Breast epithelium (tissue), 4 donors: ENCODE measurements at regions of chr12 and their contacts with region 1.

Region 1: GRCh38 chr12:50504798-50505385 is at the start of gene DIP2B:
- DNase-seq: peak; percentile 93 to 95
- H3K4me3 ChIP-seq: peak within 1 kb of the TSS; percentile 83 to 87 (median 85)
- H3K27ac ChIP-seq: peak within 1 kb of the TSS; percentile 93 to 94
- H3K4me1 ChIP-seq: peaks cover 0 to 7% of the 10 kb centered on the region in 2 donors
- H3K27me3 ChIP-seq: no peaks in the 10 kb centered on the region
- CTCF ChIP-seq: peak; percentile 94 to 99 (median 97)
- POLR2A ChIP-seq: no peak
- total RNA-seq, gene DIP2B: 26.6 to 44.8 (median 33.4) TPM

Region 2: DNA sequence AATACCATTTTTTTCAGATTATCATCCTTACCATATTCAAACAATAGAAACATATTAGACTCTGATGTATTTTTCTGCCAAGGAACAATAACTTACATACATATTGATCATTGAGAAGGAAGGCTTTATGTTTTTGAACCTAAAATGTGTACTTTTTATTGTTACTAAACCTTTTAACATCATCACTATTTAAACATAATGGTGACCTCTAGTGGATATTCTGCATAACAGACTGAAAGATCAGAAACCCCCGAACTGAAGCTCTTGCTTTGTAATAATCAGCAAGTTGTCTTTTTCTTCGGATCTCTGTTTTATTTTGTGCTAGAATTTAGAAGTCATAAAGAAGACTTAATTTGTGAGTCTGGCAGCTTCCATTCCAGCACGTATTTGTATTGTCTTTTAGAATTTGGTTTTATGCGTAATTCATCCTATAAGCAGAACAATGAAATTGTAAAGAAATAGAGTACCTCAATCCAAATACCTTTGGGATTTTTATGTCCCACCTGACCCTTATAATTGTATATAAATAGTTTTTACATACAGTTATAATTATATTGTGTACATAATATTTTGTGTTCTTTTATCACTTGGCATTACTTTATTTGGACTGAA is 133.1 kb after region 1 on chr12:
- intact Hi-C with region 1: loop called (anchors 5 kb)
- DNase-seq: no peak
- H3K4me3 ChIP-seq: no peak overlapping the region
- H3K27ac ChIP-seq: peak overlapping the region in 1 of 2 donors; percentile 27
- H3K4me1 ChIP-seq: no peaks in the 10 kb centered on the region
- H3K27me3 ChIP-seq: no peaks in the 10 kb centered on the region
- CTCF ChIP-seq: peak; percentile 58 to 78 (median 74)
- POLR2A ChIP-seq: no peak